Endothelial cell of umbilical vein (primary cell): ENCODE measurements at regions of chr18 and their contacts with region 1.

Region 1: GRCh38 chr18:54240629-54241107 is 16.2 kb upstream of the MBD2 start:
- DNase-seq: no peak
- H3K4me3 ChIP-seq: no peak overlapping the region
- H3K27ac ChIP-seq: no peak overlapping the region
- H3K4me1 ChIP-seq: peaks cover 29% of the 10 kb centered on the region
- H3K27me3 ChIP-seq: no peaks in the 10 kb centered on the region
- CTCF ChIP-seq: no peak
- POLR2A ChIP-seq: no peak

Region 2: DNA sequence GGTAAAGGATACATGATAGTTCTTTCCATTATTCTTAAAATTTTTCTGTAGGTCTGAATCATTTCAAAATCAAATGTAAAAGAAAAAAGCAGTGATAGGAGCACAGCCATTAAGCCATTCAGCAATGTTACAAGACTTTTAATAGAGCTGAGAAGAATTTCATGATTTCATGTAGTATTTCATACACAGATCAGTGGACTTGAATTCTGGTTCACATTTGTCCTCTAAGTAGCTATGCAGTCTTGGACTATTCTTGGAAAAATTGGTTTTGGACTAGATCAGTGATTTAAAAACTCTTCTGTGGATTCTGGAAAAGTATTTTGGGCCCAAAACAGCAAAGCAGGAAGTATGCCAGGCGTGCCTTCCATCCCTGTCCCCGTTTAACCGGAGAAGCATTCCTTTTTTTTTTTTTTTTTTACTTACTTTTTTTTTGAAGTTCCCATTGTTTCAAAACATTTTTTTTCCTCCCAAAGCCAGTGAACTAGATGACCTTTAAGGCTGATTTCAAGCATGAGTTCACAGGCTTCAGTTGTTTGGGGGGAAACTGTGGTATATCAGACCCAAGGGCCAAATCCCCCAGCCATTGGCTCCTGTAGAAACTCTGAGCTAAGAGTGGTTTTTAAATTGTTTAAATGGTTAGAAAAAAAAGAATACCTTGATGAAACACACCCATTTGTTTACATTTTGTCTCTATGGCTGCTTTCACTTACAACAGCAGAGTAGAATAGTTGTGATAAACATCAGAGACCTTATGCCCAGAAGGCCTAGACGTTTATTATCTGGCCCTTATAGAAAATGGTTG is 11.1 kb after region 1 on chr18:
- CTCF ChIA-PET with region 1: interaction called, 14 read pairs
- POLR2A ChIA-PET with region 1: no interaction called
- dilution Hi-C with region 1: no loop called
- intact Hi-C with region 1: loop called (anchors 1 kb)
- DNase-seq: peak; percentile 46
- H3K4me3 ChIP-seq: no peak overlapping the region
- H3K27ac ChIP-seq: peak overlapping the region; percentile 41
- H3K4me1 ChIP-seq: peaks cover 20% of the 10 kb centered on the region
- H3K27me3 ChIP-seq: no peaks in the 10 kb centered on the region
- CTCF ChIP-seq: no peak
- POLR2A ChIP-seq: no peak

Region 3: DNA sequence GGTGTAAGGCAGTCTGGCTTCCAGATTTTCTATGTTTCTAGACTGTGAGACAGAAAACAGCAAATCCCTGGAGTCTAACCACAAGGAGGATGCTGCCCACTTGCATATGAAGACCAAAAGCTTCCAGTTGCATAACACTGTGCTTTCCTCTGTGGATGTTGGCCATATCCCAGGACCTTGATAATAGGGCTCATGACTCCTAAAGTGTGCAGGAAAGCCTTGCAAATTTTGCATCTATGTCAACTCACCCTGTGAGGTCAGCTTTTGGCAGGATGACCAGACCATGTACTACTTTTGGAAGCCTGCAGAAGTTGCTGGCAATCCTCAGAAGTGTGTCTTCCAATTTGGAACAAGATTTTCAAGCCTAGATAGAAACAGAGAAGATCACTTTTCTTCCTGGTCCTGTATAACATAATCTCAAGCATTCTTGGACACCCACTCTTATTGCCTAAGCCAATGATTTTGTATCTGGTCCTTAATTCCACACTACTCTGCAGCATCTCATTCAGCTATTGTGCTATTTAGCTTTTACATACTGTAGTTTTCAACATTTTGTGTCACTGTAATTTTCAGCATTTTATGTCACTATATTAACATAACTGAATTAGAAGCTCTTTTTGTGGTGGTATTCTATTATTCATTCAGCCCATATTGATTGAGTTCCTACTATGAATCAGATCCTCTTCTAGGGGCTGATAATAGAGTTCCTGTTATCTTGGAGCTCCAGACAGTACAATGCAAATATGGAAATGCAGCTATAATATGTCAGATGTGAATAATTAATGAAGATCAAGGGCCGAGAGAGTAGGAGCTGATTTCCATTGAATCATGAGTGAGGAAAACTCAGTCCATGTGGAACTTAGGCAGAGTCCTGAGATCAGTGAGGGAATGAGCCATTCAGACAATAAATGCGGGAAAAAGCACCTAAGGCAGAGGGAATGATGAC is 502.3 kb after region 1 on chr18:
- CTCF ChIA-PET with region 1: no interaction called
- POLR2A ChIA-PET with region 1: no interaction called
- dilution Hi-C with region 1: no loop called
- intact Hi-C with region 1: no loop called
- DNase-seq: peak; percentile 37
- H3K4me3 ChIP-seq: no peak overlapping the region
- H3K27ac ChIP-seq: no peak overlapping the region
- H3K4me1 ChIP-seq: peaks cover 7% of the 10 kb centered on the region
- H3K27me3 ChIP-seq: no peaks in the 10 kb centered on the region
- CTCF ChIP-seq: no peak
- POLR2A ChIP-seq: no peak